ENCODE measurements at regions of chr21 and their contacts with region 1.

Region 1: GRCh38 chr21:42781150-42781970 is 98.0 kb downstream of the WDR4 start:
- DNase-seq: no peak
- ATAC-seq: peak; percentile 63
- H3K4me3 ChIP-seq: no peak overlapping the region
- H3K27ac ChIP-seq: no peak overlapping the region
- H3K4me1 ChIP-seq: no peaks in the 10 kb centered on the region
- H3K27me3 ChIP-seq: peaks cover 51% of the 10 kb centered on the region
- CTCF ChIP-seq: no peak
- POLR2A ChIP-seq: no peak
- RAD21 ChIP-seq: no peak

Region 2: DNA sequence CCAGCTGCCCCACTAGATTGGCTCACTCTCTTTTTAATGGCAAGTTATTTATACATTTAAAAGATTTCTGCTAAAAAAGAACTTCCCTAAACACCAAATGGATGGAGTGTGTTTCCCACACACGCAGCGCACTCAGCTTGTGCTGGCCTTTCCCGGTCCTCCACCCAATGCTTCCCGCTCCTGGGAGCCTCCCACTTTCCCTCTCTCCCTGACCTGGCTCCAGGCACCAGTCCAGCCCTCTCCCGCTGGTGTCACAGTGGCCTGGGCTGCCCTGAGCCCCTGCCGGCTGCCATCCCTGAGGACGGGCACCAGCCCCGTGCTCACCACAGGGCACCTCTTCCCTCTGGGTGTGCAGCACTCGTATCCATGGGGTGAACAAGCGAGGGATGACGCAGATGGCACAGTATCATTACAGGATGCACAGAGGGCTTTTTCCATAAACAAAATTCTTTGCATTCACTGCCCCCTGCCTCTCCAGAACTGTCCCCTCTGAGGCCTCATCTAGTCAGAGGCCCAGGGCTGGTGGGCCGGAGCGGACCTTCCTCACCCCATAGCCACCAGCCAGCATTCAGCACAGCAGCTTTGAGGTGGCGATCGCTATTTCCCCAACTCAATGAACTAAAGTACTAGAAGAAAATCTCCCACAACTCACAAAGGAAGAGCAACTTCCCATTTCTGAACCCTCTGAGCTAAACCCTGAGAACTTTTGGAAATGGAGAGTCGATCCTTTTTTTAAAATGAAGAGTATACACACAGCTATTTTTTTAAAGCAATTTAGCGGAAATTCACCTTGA is 199.2 kb before region 1 on chr21:
- CTCF ChIA-PET with region 1: no interaction called
- POLR2A ChIA-PET with region 1: no interaction called
- dilution Hi-C with region 1: no loop called
- in situ Hi-C with region 1: loop called (anchors 10 kb)
- intact Hi-C with region 1: no loop called
- DNase-seq: no peak
- ATAC-seq: no peak
- H3K4me3 ChIP-seq: no peak overlapping the region
- H3K27ac ChIP-seq: no peak overlapping the region
- H3K4me1 ChIP-seq: no peaks in the 10 kb centered on the region
- H3K27me3 ChIP-seq: peaks cover 22% of the 10 kb centered on the region
- CTCF ChIP-seq: no peak
- POLR2A ChIP-seq: no peak
- RAD21 ChIP-seq: no peak

Region 3: GRCh38 chr21:42677339-42678321 is 103.7 kb before region 1 on chr21:
- CTCF ChIA-PET with region 1: no interaction called
- POLR2A ChIA-PET with region 1: no interaction called
- dilution Hi-C with region 1: no loop called
- in situ Hi-C with region 1: no loop called
- intact Hi-C with region 1: no loop called
- DNase-seq: peak; percentile 60
- ATAC-seq: 0 out of 2 replicates have a peak, but pooled peaks have one; percentile 17
- H3K4me3 ChIP-seq: no peak overlapping the region
- H3K27ac ChIP-seq: no peak overlapping the region
- H3K4me1 ChIP-seq: no peaks in the 10 kb centered on the region
- H3K27me3 ChIP-seq: peaks cover 7% of the 10 kb centered on the region; the same call in 1 of the 2 replicates
- CTCF ChIP-seq: no peak
- POLR2A ChIP-seq: no peak
- RAD21 ChIP-seq: no peak

Measured in IMR-90 (cell line).